ENCODE measurements at regions of chr4 and their contacts with region 1.

Region 1: GRCh38 chr4:106818764-106819163 is 217.3 kb downstream of the DKK2 start:
- DNase-seq: no peak
- H3K4me3 ChIP-seq: no peak overlapping the region
- H3K27ac ChIP-seq: no peak overlapping the region
- H3K4me1 ChIP-seq: no peaks in the 10 kb centered on the region
- H3K27me3 ChIP-seq: no peaks in the 10 kb centered on the region
- CTCF ChIP-seq: peak; percentile 62

Region 2: DNA sequence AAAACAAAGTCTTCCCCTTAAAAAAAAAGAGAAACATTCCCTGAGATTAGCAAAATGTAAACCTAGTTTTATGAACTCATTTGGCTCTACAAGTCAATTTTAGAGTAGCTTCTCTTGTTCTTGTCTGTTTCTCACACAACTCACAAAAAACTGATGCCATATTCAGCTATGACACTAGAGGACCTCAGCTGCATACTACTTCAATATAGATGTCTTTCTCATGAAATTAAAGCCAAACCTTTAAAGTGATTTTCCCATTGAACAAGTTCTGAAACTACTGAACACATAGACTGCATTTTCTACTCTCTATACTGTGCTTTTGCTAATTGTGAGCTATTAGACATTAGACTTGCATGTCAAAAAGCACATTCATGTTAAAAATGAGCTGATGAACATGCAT is 552.6 kb before region 1 on chr4:
- CTCF ChIA-PET with region 1: no interaction called
- POLR2A ChIA-PET with region 1: no interaction called
- intact Hi-C with region 1: loop called (anchors 10 kb)
- DNase-seq: peak; percentile 79
- H3K4me3 ChIP-seq: no peak overlapping the region
- H3K27ac ChIP-seq: no peak overlapping the region
- H3K4me1 ChIP-seq: peaks cover 13% of the 10 kb centered on the region
- H3K27me3 ChIP-seq: no peaks in the 10 kb centered on the region
- CTCF ChIP-seq: peak; percentile 72